OCI-LY7 (cell line): ENCODE measurements at regions of chr9 and their contacts with region 1.

Region 1: GRCh38 chr9:129006328-129007034 is 21.6 kb downstream of the SH3GLB2 start:
- DNase-seq: peak; percentile 75
- H3K4me3 ChIP-seq: no peak overlapping the region
- H3K27ac ChIP-seq: no peak overlapping the region
- H3K4me1 ChIP-seq: no peaks in the 10 kb centered on the region
- CTCF ChIP-seq: peak; percentile 98

Region 2: GRCh38 chr9:128742401-128742800 is 264.1 kb before region 1 on chr9:
- CTCF ChIA-PET with region 1: no interaction called
- POLR2A ChIA-PET with region 1: no interaction called
- intact Hi-C with region 1: no loop called
- DNase-seq: no peak
- H3K4me3 ChIP-seq: no peak overlapping the region
- H3K27ac ChIP-seq: no peak overlapping the region
- H3K4me1 ChIP-seq: no peaks in the 10 kb centered on the region
- CTCF ChIP-seq: no peak

Region 3: DNA sequence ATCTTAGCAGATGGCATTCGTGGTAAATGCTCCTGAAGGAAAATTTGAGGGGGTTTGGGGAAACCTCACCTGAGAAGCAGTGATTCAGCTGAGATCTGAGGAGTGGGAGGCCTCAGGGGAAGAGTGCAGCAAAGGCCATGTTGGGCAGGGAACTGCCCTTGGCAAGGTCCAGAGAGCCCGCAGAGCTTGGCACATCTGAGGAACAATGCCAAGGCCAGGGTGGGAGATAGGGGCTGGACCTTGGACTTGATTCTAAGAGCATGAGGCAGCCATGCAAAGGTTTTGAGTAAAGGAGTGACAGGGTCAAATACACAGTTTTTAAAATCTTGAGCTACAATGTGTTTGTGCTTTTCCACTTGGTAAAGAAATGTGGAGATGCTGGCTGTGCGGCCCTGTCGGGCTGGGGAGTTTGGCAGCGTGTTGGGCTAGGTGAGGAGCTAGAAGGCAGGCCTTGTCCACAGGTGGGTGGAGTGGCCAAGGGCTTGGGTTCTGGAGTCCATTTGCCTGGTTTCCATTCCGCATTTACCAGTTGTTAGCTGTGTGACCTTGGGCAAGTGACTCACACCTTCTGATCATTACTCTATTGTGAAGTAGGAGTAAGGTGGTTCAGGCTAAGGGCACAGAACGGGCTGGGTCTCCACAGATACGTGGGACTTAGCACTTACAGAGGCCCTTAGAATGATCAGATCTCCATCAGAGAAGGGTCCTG is 213.3 kb before region 1 on chr9:
- CTCF ChIA-PET with region 1: no interaction called
- POLR2A ChIA-PET with region 1: no interaction called
- intact Hi-C with region 1: no loop called
- DNase-seq: no peak
- H3K4me3 ChIP-seq: no peak overlapping the region
- H3K27ac ChIP-seq: no peak overlapping the region
- H3K4me1 ChIP-seq: peaks cover 6% of the 10 kb centered on the region
- CTCF ChIP-seq: no peak

Region 4: DNA sequence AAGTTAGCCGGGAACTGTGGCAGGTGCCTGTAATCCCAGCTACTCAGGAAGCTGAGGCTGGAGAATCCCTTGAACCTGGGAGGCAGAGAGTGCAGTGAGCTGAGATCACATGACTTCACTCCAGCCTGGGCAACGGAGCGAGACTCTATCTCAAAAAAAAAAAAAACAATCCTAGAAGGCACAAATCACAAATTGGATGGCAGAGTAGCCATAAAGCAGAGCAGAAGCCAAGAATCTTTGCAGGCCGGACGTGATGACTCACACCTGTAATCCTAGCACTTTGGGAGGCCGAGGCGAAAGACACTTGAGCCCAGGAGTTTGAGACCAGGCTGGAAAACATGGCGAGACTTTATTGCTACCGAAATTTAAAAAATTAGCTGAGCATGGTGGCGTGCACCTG is 1563.7 kb after region 1 on chr9:
- CTCF ChIA-PET with region 1: interaction called, 11 read pairs
- POLR2A ChIA-PET with region 1: no interaction called
- intact Hi-C with region 1: no loop called
- DNase-seq: no peak
- H3K4me3 ChIP-seq: no peak overlapping the region
- H3K27ac ChIP-seq: no peak overlapping the region
- H3K4me1 ChIP-seq: no peaks in the 10 kb centered on the region
- CTCF ChIP-seq: no peak